AG04450 (cell line): ENCODE measurements at regions of chr5 and their contacts with region 1.

Region 1: GRCh38 chr5:177390363-177391300 is 6.4 kb downstream of the SLC34A1 start:
- DNase-seq: no peak
- H3K4me3 ChIP-seq: no peak overlapping the region
- H3K27ac ChIP-seq: peak overlapping the region; percentile 89
- H3K27me3 ChIP-seq: peaks cover 20% of the 10 kb centered on the region
- CTCF ChIP-seq: peak; percentile 95

Region 2: DNA sequence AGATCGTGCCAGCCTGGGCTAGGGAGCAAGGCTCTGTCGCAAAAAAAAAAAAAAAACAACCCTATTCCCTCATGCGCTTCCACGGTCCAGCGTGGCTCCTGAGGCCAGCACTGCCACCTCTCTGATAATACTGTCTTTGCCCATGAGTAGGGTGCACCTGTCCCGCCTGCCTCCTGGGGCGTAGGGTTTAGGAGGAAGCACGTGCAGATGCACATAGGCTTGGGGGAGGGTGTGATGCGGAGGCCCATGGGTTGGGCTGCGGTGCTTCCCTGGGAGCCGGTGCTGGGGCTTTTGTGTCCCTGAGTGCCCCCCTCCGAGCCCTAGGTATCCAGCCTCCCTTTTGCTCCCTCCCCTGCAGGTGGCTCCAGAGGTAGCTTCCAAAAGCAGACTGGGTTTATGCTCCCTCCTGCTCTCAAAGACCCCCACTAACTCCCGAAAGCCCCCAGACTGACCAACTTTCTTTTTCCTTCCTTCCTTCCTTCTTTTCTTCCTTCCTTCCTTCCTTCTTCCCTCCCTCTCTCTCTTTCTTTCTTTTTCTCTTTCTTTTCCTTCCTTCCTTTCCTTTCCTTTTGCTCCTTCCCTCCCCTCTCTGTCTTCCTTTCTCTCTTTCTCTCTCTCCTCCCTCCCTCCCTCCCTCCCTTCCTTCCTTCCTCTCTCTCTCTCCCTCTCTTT is 291.1 kb before region 1 on chr5:
- CTCF ChIA-PET with region 1: no interaction called
- POLR2A ChIA-PET with region 1: no interaction called
- DNase-seq: no peak
- H3K4me3 ChIP-seq: no peak overlapping the region
- H3K27ac ChIP-seq: no peak overlapping the region
- H3K27me3 ChIP-seq: peaks cover 5% of the 10 kb centered on the region
- CTCF ChIP-seq: no peak

Region 3: DNA sequence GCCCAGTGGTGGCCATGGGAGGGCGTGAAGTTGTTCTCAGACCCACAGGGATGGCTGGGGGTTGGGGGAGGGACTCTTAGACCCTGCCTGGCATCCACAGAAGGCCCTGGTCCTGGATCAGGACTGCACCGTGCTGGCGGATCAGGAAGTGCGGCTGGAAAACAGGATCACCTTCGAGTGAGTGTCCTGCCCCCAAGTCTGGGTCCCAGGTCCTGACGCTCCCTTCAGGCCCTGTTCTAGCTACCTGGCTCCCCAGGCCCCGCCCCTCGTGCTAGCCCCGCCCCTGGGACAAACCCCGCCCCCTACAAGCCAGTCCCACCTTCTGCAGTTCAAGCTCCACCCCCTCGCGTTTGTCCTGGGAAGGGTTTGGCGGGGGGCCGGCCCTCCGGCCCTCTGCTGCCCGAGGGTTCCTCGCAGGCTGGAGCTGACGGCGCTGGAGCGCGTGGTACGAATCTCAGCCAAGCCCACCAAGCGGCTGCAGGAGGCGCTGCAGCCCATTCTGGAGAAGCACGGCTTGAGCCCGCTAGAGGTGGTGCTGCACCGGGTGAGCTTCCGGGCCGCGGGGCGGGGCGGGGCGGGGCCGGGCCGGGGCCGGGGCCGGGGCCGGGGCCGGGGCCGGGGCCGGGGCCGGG is 20.0 kb before region 1 on chr5:
- CTCF ChIA-PET with region 1: interaction called, 61 read pairs
- POLR2A ChIA-PET with region 1: interaction called, 12 read pairs
- DNase-seq: peak; percentile 72
- H3K4me3 ChIP-seq: peak overlapping the region; percentile 65
- H3K27ac ChIP-seq: no peak overlapping the region
- H3K27me3 ChIP-seq: no peaks in the 10 kb centered on the region
- CTCF ChIP-seq: peak; percentile 60

Region 4: DNA sequence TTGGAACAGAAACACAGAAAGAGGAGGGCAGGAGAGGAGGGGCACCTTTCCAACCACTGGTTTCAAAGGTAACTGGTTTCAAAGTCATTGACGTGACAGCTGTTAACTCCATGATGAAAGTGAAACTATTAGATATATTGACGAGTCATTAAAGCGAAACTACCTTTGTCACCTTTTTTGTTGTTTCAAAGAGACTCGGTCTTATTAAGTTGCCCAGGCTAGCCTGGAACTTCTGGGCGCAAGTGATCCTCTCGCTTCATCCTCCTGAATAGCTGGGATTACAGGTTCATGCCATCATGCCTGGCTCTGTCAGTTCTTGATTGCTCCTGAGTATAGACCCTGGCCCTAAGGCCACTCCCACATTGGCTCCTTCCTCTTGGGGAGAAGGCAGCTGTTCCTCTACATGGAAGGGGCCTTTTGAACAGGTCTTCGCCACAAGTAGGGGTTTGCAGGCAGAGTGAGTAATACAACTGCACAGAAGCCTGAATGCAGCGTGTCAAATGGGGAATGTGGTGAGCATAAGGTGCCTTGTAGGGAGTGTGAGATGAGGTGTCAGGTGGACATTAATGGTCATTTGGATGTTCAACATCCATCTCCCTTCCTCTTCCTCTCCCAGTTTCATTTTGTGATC is 22.1 kb after region 1 on chr5:
- CTCF ChIA-PET with region 1: interaction called, 13 read pairs
- POLR2A ChIA-PET with region 1: no interaction called
- DNase-seq: no peak
- H3K4me3 ChIP-seq: no peak overlapping the region
- H3K27ac ChIP-seq: no peak overlapping the region
- H3K27me3 ChIP-seq: peaks cover 18% of the 10 kb centered on the region
- CTCF ChIP-seq: no peak

Region 5: GRCh38 chr5:177425801-177426565 is 35.4 kb after region 1 on chr5:
- CTCF ChIA-PET with region 1: interaction called, 26 read pairs
- POLR2A ChIA-PET with region 1: interaction called, 7 read pairs
- DNase-seq: peak; percentile 100
- H3K4me3 ChIP-seq: peak overlapping the region; percentile 70
- H3K27ac ChIP-seq: peak overlapping the region; percentile 96
- H3K27me3 ChIP-seq: no peaks in the 10 kb centered on the region
- CTCF ChIP-seq: no peak

Region 6: DNA sequence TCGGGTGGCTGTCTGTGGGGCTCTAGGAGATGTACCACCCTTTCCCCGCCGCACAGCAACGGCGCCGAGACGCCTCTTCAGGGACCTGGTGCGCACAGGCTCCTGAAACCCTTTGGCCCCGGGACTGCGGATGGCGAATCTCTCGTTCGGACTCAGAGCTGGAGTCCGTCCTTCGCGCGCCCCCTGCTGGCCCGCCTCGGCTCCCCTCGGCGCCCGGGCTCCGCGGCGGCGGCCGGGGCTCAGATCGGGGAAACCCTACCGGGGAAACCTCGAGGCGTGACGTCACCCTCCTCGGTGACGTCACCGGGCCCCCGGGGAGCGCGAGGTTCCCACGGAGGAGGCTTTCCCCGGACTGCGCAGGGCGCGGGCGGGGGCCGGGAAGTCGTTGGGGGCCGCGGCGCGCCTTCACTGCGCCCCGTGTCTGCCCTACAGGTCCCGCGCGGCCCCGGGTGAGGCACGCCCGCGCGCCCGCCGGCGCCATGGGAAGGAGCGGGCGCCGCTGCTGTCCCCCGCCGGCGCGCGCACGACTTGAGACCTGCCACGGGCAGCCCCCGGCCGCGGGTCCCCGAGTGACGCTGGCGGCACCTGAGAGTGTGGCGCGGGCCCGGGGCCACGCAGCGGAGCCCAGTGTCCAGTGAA is 63.9 kb after region 1 on chr5:
- CTCF ChIA-PET with region 1: interaction called, 205 read pairs
- POLR2A ChIA-PET with region 1: interaction called, 13 read pairs
- DNase-seq: no peak
- H3K4me3 ChIP-seq: peak overlapping the region; percentile 51
- H3K27ac ChIP-seq: peak overlapping the region; percentile 11
- H3K27me3 ChIP-seq: no peaks in the 10 kb centered on the region
- CTCF ChIP-seq: peak; percentile 77

Region 7: GRCh38 chr5:177497292-177498033 is 106.8 kb after region 1 on chr5 and contains the start of gene PDLIM7:
- CTCF ChIA-PET with region 1: interaction called, 35 read pairs
- POLR2A ChIA-PET with region 1: interaction called, 8 read pairs
- DNase-seq: peak; percentile 95
- H3K4me3 ChIP-seq: peak within 1 kb of the TSS; percentile 95
- H3K27ac ChIP-seq: peak within 1 kb of the TSS; percentile 99
- H3K27me3 ChIP-seq: no peaks in the 10 kb centered on the region
- CTCF ChIP-seq: peak; percentile 15; the same call in 1 of the 2 replicates
- polyA plus RNA-seq, gene PDLIM7: 195 and 268 TPM in 2 replicates